Right ventricle myocardium inferior (tissue), 1 donor: ENCODE measurements at regions of chr11 and their contacts with region 1.

Region 1: DNA sequence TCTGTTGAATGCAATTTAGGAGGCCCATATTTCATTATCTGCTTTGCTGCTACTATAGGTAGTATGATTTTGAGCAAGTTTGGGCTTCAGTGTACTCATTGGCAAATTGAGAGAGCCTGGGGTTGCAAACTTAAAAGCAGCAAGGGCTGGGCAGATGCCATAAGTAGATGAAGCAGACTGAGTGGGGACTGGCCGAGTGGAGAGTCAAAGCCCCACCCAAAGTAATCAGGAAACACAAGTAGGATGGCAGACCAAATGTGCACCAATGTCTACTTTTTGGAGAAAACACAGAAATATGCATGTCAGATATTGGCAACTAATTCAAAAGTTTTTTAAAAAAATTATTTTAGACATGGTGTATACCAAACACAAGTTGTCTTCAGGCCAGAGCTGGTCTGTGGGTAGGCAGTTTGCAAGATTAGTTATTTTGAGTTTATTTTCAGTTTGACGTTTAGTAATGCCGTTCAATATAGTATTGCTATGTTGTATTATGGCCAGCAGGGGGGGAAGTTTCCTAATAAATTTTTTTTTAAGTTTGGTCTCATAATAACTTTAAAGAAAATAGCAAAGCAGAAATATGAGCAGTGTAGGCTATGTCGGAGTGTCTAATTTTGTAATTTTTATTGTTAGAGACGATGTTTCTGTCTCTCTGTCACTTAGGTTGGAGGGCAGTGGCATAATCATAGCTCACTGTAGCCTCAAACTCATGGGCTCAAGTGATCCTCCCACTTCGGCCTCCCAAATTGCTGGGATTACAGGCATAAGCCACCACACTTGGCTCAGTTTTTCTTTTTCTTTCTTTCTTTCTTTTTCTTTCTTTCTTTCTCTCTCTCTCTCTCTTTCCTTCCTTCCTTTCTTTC is 105.1 kb downstream of the HIPK3 start:
- DNase-seq: no peak
- ATAC-seq: peak; percentile 24

Region 2: DNA sequence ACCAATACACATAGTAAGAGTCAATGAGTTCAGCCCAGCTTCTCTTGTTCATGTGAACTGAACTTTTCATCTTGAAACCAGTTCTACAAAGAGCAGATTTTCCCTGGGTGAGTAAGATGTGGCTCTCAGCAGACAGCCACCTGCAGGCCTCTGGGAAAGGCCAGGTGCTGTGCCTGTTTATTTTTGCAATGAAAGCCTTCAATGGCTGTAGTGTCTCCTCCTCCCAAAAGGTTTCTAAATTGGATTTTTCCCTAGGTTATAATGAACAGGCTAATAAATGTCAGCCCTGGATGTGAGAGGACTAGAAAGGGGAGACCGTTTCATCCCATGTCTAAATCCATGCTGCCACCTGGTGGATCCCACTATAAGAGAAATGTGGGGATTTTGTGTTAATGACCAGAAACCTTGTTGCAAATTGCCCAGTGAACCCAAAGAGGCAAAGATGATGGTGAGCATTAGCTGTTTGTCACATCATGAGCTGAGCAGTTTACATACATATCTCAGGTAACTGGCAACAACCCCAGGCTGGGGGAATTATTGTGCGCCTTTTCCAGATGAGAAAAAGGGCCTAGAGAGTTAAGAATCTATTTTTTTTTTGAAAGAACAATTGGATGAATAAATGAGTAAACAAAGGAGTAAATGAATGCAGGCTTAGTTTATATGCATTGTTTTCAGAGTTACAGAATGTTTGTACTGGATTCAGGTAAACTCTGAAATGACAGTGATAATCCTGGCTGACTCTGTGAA is 325.6 kb after region 1 on chr11:
- intact Hi-C with region 1: loop called (anchors 1 kb)
- DNase-seq: no peak
- ATAC-seq: no peak

Region 3: DNA sequence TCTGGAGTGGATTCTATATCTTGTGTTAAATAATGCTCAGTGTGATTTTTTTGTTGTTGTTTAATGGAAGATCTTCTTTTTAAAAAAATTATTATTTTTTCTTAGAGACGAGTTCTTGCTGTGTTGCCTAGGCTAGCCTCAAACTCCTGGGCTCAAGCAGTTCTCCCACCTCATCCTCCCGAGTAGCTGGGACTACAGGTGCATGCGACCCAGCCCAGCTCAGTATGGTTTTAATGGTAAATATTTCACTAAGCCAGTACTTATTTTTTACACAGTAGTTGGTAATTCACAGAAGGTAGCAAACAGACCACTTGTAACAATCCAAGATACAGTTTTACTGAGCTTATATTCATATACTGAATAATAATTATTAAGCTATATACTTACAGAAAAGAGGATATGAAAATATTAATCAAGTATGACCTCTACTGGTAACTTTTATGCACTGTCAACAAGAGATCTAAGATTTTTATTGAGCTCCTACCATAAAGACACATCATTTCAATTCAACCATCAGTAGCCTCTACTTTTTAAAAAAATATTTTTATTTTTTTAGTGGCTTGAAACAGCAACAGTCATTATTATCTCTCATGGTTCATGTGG is 380.1 kb after region 1 on chr11:
- intact Hi-C with region 1: loop called (anchors 2 kb)
- DNase-seq: no peak
- ATAC-seq: peak; percentile 27

Region 4: GRCh38 chr11:33808228-33808828 is 446.0 kb after region 1 on chr11:
- intact Hi-C with region 1: loop called (anchors 10 kb)
- DNase-seq: peak; percentile 81
- ATAC-seq: peak; percentile 81

Region 5: DNA sequence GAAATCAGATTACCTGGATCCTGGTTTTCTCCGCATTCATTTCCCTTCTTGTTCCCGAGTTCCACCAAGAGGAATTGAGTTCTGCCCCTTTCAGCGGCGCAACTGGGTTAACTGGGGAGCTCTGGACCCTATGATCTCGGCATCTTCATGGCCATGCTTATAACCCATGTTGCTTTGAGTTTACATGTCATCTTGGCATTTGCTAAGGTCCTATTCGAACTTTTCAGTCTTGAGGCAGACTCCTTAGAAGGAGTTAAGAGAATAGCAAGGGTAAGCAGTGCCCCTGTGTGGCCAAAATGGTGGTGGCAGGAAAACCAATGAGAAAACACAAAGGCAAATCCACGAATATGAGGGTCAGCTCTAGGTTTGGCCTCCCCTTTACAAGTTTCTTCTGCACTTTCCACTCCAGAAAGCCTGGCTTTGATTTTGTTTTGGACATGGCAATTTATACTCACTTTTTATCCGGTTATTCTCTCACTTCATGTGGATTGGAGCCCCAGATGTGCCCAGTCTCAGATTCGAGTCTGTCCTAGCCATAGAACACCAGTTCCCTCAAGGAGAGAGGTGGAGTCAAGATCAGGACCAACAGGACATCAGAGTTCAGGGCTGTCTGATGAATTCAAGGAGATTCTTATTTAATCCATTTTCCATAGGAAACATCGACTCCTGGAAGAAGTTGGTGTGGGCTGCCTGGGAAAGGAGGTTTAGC is 467.3 kb after region 1 on chr11:
- intact Hi-C with region 1: loop called (anchors 2 kb)
- DNase-seq: no peak
- ATAC-seq: peak; percentile 79